Ovary (tissue), 10 donors: ENCODE measurements at regions of chr2 and their contacts with region 1.

Region 1: GRCh38 chr2:232327105-232328041 is 51.2 kb upstream of the ALPP start:
- DNase-seq: peak; percentile 39 to 80 (median 74)
- H3K4me3 ChIP-seq: no peak overlapping the region
- H3K27ac ChIP-seq: no peak overlapping the region
- H3K4me1 ChIP-seq: no peaks in the 10 kb centered on the region
- H3K27me3 ChIP-seq: no peaks in the 10 kb centered on the region
- CTCF ChIP-seq: peak; percentile 49 to 78 (median 65)
- EP300 ChIP-seq: no peak
- POLR2A ChIP-seq: no peak

Region 2: DNA sequence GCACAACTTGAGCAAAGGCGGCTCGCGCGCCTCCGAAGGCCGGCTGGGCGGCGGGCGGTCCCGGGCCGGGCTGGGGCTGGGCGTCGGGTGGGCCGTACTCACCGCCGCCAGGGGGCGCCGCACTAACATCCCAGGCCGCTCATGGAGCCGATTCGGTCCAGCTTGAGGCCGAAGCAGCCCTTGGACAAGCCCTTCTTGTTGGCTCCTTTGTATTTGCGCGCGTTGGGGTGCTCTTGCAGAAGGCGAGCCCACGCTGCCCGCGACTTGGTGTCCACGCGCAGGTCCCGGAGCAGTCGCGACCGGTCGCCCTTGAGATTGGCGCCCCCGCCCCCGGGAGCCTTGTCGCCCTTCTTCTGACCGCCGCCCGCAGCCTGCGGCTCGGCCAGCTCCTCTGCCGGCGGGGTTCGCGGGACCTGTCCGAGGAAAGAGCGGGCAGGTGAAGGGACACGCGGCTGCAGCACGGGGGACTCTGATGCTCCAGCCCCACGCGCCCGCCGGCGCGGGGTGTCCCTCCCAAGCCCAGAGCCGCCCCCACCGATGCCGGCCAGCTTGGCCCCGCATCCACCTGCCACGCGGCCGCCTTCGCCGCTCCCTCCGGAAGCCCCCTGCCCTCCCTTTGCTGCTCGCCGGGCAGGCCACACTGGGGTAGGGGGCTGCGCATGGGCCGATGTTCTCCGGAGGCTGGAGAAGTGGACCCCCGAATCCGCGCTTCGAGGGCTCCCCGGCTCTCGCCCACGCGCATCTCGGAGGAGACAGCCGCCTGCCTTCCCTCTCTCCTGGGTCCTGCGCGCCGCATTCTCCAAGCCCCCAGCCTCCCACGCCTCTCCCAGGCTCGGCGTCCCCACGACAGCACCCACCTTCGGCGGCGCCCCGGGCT is 401.8 kb before region 1 on chr2:
- intact Hi-C with region 1: loop called (anchors 2 to 5 kb)
- DNase-seq: peak; percentile 82 to 93 (median 89)
- H3K4me3 ChIP-seq: peak overlapping the region; percentile 24
- H3K27ac ChIP-seq: no peak overlapping the region
- H3K4me1 ChIP-seq: peaks cover 6% of the 10 kb centered on the region
- H3K27me3 ChIP-seq: no peaks in the 10 kb centered on the region
- CTCF ChIP-seq: peak; percentile 80 to 91 (median 86)
- EP300 ChIP-seq: no peak
- POLR2A ChIP-seq: no peak

Region 3: GRCh38 chr2:232142049-232142448 is 185.3 kb before region 1 on chr2:
- intact Hi-C with region 1: no loop called
- DNase-seq: peak in 4 of 5 donors; percentile 34 to 44 (median 38)
- H3K4me3 ChIP-seq: no peak overlapping the region
- H3K27ac ChIP-seq: no peak overlapping the region
- H3K4me1 ChIP-seq: no peaks in the 10 kb centered on the region
- H3K27me3 ChIP-seq: no peaks in the 10 kb centered on the region
- CTCF ChIP-seq: peak; percentile 19 to 57 (median 37)
- EP300 ChIP-seq: no peak
- POLR2A ChIP-seq: no peak

Region 4: GRCh38 chr2:232438951-232439757 is 111.8 kb after region 1 on chr2:
- intact Hi-C with region 1: loop called in 2 of 4 experiments (anchors 5 to 10 kb)
- DNase-seq: peak in 2 of 5 donors; percentile 41 to 57
- H3K4me3 ChIP-seq: no peak overlapping the region
- H3K27ac ChIP-seq: no peak overlapping the region
- H3K4me1 ChIP-seq: peaks cover 3% of the 10 kb centered on the region
- H3K27me3 ChIP-seq: no peaks in the 10 kb centered on the region
- CTCF ChIP-seq: peak in 2 of 3 donors; percentile 25 to 50
- EP300 ChIP-seq: no peak
- POLR2A ChIP-seq: no peak

Region 5: DNA sequence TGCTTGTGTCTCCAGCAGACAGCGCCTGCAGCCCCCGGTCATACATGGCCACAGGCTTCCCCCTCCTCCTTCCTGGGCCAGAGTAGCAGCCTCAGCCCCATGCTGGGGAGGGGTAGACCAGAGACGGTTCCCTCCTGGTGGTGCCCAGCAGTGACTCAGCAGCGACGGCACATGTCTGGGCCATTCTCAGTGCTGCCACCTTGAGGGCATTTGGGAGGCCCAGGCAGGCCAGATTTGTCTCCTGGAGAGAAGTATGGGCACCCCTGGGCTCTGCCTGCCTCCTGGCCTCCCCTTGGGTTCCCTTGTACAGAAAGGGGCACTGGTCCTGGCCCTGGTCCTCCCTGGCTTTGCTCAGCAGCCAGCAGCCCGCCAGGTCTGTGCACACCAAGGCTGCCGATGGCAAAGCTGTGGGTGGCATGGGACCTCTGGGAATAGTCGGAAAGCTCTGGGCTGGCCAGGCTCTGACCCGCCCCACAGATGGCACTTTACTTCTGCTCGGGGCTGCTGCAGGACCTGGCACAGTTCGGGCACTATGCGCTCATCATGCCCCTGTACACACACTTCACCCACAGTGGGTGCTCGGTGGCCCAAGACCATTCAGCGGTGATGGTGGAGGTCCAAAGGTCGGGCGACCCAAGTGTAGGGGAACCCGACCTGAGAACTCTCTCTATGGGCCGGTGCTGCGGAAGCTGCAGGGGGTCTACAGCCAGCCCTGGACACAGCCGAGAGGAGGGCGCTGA is 117.2 kb after region 1 on chr2:
- intact Hi-C with region 1: loop called in 2 of 4 experiments (anchors 5 to 10 kb)
- DNase-seq: peak in 1 of 5 donors; percentile 25
- H3K4me3 ChIP-seq: no peak overlapping the region
- H3K27ac ChIP-seq: no peak overlapping the region
- H3K4me1 ChIP-seq: peaks cover 3% of the 10 kb centered on the region
- H3K27me3 ChIP-seq: no peaks in the 10 kb centered on the region
- CTCF ChIP-seq: no peak
- EP300 ChIP-seq: no peak
- POLR2A ChIP-seq: no peak

Region 6: DNA sequence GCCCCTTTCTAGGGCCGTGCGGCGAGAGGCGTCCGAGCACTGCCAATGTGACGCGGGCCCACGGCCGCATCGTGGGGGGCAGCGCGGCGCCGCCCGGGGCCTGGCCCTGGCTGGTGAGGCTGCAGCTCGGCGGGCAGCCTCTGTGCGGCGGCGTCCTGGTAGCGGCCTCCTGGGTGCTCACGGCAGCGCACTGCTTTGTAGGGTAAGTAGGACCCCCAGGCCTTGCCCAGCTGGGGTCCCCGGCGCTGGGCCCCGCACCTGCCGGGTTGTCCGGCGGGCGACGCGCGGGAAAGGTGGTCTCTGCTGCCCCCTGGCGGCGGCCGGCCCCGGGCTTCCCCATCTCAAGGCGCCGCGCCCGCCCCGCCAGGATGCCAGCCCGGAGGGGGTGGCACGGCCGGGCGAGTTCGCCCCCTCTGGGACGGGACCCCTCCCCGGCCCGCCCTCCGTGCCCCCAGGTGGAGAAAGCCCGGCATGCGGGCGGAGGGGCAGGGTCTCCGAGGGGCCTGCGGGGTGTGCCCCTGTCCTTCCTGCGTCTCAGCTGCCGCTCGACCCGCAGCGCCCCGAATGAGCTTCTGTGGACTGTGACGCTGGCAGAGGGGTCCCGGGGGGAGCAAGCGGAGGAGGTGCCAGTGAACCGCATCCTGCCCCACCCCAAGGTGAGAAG is 194.7 kb after region 1 on chr2:
- intact Hi-C with region 1: loop called in 1 of 4 experiments (anchors 10 kb)
- DNase-seq: peak; percentile 39 to 81 (median 77)
- H3K4me3 ChIP-seq: peak overlapping the region; percentile 21
- H3K27ac ChIP-seq: no peak overlapping the region
- H3K4me1 ChIP-seq: no peaks in the 10 kb centered on the region
- H3K27me3 ChIP-seq: no peaks in the 10 kb centered on the region
- CTCF ChIP-seq: peak; percentile 91 to 97 (median 94)
- EP300 ChIP-seq: no peak
- POLR2A ChIP-seq: no peak